Activated CD4-positive, alpha-beta memory T cell treated with anti-CD3 and anti-CD28 coated beads, Interleukin-2, amount 10 ng/mL, durations not matched to agents 7 days and 5 days (primary cell): ENCODE measurements at regions of chr1 and their contacts with region 1.

Region 1: DNA sequence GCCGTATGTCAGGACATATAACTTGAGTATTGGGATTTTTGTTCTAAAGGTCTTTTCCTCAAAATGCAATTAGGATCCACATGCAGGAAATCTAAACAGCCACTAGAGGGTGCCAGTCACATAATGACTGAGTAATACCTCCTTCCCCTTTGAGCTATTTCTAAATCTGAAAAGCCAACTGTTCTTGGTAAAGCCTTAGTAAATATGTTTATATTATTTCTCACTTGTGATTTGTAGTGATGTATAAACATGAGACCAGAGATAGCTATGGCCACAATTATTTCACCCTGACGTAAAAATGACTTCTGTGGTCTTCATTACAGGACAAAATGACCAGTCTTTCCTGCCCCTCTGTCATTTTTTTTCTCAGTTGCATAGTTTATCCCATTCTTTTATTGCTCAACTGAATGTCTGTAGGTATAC is 41.0 kb upstream of the DR1 start:
- DNase-seq: peak; percentile 42
- H3K4me3 Mint-ChIP-seq: no peak overlapping the region
- H3K27ac Mint-ChIP-seq: no peak overlapping the region
- H3K4me1 Mint-ChIP-seq: no peaks in the 10 kb centered on the region
- H3K27me3 Mint-ChIP-seq: no peaks in the 10 kb centered on the region

Region 2: GRCh38 chr1:93288558-93288957 is 16.2 kb before region 1 on chr1:
- CTCF ChIA-PET with region 1: interaction called, 17 read pairs
- POLR2A ChIA-PET with region 1: no interaction called
- DNase-seq: no peak
- H3K4me3 Mint-ChIP-seq: no peak overlapping the region
- H3K27ac Mint-ChIP-seq: no peak overlapping the region
- H3K4me1 Mint-ChIP-seq: no peaks in the 10 kb centered on the region
- H3K27me3 Mint-ChIP-seq: no peaks in the 10 kb centered on the region

Region 3: GRCh38 chr1:93328809-93329760 is 24.4 kb after region 1 on chr1:
- CTCF ChIA-PET with region 1: interaction called, 19 read pairs
- POLR2A ChIA-PET with region 1: no interaction called
- DNase-seq: no peak
- H3K4me3 Mint-ChIP-seq: no peak overlapping the region
- H3K27ac Mint-ChIP-seq: no peak overlapping the region
- H3K4me1 Mint-ChIP-seq: no peaks in the 10 kb centered on the region
- H3K27me3 Mint-ChIP-seq: no peaks in the 10 kb centered on the region

Region 4: DNA sequence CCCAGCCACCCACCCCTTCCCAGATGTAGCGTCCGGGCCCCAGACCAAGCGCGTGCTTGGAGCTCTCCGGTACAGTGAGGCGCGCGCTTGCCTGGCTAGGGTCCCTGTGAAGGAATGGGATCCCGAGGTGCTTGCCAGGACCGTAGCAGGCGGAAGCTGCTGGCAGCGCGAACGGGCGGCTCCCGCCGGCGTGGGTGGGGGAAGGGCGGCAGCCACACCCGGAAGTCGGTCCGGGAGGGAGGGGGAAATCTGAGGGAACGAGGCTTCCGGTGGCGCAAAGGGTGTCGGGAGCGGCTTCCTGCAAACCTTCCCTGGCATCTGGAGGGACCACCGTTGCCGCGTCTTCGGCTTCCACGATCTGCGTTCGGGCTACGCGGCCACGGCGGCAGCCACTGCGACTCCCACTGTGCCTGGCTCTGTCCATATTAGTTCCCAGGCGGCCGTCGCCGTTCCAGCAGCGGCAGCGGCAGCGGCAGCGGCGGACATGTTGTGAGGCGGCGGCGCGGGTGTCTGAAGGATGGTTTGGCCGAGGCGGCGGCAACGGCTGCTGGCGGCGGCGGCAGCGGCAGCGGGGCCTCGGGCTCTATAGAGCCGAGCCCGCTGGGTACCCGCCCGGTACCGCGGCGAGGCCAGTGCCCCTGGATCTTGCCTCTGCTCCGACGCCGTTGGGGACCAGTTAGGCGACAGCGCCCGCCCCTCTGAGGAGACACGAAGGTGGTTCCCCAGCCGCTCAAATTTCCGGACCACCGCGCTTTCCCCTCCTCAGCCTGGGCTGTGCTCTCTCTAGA is 41.1 kb after region 1 on chr1 and contains the start of gene DR1:
- CTCF ChIA-PET with region 1: interaction called, 19 read pairs
- POLR2A ChIA-PET with region 1: interaction called, 10 read pairs
- DNase-seq: peak; percentile 92
- H3K4me3 Mint-ChIP-seq: peak within 1 kb of the TSS; percentile 99
- H3K27ac Mint-ChIP-seq: peak within 1 kb of the TSS; percentile 97
- H3K4me1 Mint-ChIP-seq: peaks cover 26% of the 10 kb centered on the region
- H3K27me3 Mint-ChIP-seq: no peaks in the 10 kb centered on the region
- total RNA-seq, gene DR1: 100 to 104 TPM

Region 5: DNA sequence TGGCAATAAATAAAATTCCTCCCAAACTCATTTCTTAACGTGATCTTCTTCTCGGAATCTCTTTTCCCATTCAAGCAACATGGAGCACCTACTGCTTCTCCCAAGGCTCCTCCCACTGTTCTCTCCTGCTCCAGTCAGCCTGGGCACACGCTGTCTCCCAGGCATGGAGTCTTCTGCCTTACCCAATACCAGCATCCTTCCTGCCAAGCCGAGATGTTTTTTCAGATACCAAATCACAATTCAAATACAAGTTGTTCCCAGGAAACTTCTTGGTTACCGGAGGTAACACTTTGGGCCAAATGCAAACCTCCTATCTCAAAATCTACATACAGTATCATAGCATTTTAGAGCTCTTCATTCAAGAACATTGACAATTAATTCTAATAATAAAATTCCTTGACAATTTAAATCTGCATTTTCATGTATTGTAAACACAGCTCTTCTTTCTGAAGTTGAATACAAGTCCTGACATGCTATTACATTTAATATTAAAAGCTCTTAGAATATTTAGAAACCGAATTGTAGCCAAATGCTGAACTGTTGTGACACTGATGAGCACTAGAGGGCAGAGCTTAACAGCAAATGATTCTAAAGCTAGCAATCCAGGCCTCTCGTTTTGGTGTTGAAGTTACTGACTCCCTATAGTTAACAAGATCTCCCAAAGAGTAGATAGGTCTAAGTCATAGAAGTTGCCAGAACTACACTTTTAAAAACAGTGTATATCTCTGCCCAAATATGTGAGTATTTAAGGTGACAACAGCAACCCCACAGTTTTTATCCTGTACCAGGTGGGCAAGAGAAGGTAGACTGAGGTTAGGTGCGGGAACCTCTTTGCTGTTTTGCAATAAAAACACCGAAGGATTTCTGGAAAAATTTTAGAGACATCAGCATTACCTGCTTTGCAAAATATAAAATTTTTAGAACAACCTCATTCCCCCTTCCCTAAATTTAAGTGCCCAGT is 324.7 kb after region 1 on chr1:
- CTCF ChIA-PET with region 1: interaction called, 11 read pairs
- POLR2A ChIA-PET with region 1: no interaction called
- DNase-seq: peak; percentile 47
- H3K4me3 Mint-ChIP-seq: no peak overlapping the region
- H3K27ac Mint-ChIP-seq: no peak overlapping the region
- H3K4me1 Mint-ChIP-seq: peaks cover 11% of the 10 kb centered on the region
- H3K27me3 Mint-ChIP-seq: no peaks in the 10 kb centered on the region

Region 6: DNA sequence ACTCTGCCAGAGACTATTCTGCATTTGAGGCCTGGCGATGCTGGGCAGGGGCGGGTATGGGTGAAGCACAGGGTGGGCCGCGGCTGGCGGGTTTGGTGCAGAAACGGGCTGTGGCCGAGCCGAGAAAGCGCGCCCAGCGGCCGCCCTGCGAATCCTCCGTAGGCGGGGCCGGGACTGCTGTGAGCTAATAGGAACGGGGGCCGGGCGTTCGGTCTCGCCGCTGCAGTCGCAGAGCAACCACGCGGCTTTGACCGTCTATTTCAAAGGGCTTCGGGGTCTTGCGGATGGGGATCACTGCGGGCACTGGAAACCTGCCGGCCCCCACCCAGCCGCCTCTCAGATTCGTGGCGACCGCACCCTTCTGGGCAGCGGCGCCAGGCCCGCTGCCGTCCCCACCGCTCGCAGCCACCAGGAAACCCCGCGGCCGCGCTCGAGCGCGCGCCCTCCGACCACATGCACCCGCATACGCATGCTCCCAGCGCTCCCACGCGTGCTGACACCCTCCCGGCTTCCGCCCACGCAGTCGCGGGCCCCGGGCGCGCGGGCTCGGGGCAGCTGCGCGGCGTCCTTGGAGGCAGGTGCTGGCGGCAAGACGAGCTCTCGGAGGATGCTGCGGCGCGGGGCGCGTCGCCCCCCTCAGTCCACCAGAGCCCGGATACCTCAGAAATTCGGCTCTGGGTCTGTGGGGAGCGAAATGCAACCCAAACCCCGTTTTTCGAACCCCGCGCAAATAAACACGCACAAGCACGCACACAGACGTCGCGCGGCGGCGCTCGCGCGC is 541.7 kb after region 1 on chr1:
- CTCF ChIA-PET with region 1: interaction called, 10 read pairs
- POLR2A ChIA-PET with region 1: interaction called, 4 read pairs
- DNase-seq: peak; percentile 83
- H3K4me3 Mint-ChIP-seq: peak overlapping the region; percentile 87
- H3K27ac Mint-ChIP-seq: peak overlapping the region; percentile 87
- H3K4me1 Mint-ChIP-seq: peaks cover 33% of the 10 kb centered on the region
- H3K27me3 Mint-ChIP-seq: peaks cover 7% of the 10 kb centered on the region